Sciatic nerve (tissue), 2 donors: ENCODE measurements at regions of chr15 and their contacts with region 1.

Region 1: GRCh38 chr15:91852741-91853510 is 582 bp upstream of the SLCO3A1 start:
- DNase-seq: peak; percentile 84
- ATAC-seq: peak; percentile 93

Region 2: GRCh38 chr15:91302588-91303439 is 550.1 kb before region 1 on chr15:
- intact Hi-C with region 1: loop called (anchors 5 kb)
- DNase-seq: no peak
- ATAC-seq: peak; percentile 80

Region 3: DNA sequence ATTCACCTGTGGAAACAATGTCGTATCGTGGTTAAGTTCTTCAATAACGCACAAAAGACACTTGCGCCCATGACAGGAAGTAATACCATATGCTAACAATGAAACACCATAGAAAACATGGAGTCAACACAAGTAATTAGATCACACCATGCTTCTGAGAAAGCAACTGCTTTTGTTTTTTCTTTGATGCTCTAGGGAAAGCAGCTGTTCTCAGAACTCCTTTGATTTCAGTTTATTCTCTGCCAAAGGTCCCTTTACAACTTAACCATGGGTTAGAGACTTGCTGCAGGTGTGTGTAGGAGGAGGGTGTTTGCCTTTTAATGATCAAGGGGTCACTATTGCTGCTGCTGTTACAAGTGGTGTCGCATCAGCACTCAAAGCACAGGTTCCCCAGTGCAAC is 323.4 kb before region 1 on chr15:
- intact Hi-C with region 1: no loop called
- DNase-seq: no peak
- ATAC-seq: no peak

Region 4: GRCh38 chr15:91942676-91943576 is 90.0 kb after region 1 on chr15:
- intact Hi-C with region 1: loop called (anchors 10 kb)
- DNase-seq: peak; percentile 85
- ATAC-seq: peak; percentile 97

Region 5: GRCh38 chr15:92077353-92078085 is 224.6 kb after region 1 on chr15:
- intact Hi-C with region 1: loop called (anchors 10 kb)
- DNase-seq: peak; percentile 83
- ATAC-seq: peak; percentile 77